HAP-1 (cell line): ENCODE measurements at regions of chr13 and their contacts with region 1.

Region 1: DNA sequence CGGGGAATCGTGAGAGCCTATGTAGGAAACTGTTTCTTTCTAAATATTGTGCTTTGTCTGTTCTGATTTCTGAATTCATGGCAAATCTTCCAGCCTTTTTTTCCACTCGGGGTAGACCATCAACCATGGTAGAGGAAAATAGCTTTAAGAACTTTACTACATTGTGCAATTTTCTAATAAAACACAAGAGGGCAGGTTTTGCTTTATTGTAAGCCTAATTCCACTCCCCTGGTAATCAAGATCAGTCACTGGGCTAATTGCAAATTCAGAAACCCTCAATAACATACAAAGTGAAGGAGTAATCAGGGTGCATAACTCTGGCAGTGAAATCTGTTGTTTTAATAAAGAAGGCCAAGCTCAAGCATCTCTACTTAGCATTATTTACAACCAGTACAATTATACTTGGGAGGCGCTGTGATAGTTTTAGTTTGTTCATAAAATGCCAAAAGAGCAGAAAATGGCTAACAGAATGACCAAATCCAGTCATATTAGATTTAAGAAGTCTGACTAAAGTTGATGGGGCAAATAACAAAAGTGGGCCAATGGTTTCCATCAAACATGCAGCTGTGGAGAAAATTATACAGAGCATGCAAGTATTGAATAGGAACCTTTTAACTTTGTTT is 43.8 kb downstream of the DCT start:
- DNase-seq: peak in 1 of 2 experiments; percentile 47
- H3K4me3 ChIP-seq: no peak overlapping the region
- H3K4me1 ChIP-seq: peaks cover 14% of the 10 kb centered on the region
- H3K27me3 ChIP-seq: peaks cover 10% of the 10 kb centered on the region; the same call in 1 of the 2 replicates

Region 2: GRCh38 chr13:93466502-93467036 is 969.1 kb before region 1 on chr13:
- in situ Hi-C with region 1: no loop called
- DNase-seq: no peak
- H3K4me3 ChIP-seq: no peak overlapping the region
- H3K4me1 ChIP-seq: 0 out of 2 replicates have a peak, but pooled peaks cover 2% of the 10 kb centered on the region
- H3K27me3 ChIP-seq: no peaks in the 10 kb centered on the region

Region 3: GRCh38 chr13:94612050-94612449 is 176.3 kb after region 1 on chr13:
- in situ Hi-C with region 1: loop called (anchors 5 kb)
- DNase-seq: no peak
- H3K4me3 ChIP-seq: no peak overlapping the region
- H3K4me1 ChIP-seq: peaks cover 12% of the 10 kb centered on the region
- H3K27me3 ChIP-seq: no peaks in the 10 kb centered on the region

Region 4: GRCh38 chr13:94722609-94723345 is 287.1 kb after region 1 on chr13:
- in situ Hi-C with region 1: no loop called
- DNase-seq: peak; percentile 69 to 83
- H3K4me3 ChIP-seq: no peak overlapping the region
- H3K4me1 ChIP-seq: peaks cover 15% of the 10 kb centered on the region
- H3K27me3 ChIP-seq: no peaks in the 10 kb centered on the region

Region 5: GRCh38 chr13:95156208-95156607 is 720.5 kb after region 1 on chr13:
- in situ Hi-C with region 1: loop called (anchors 25 kb)
- DNase-seq: no peak
- H3K4me3 ChIP-seq: no peak overlapping the region
- H3K4me1 ChIP-seq: peaks cover 23% of the 10 kb centered on the region
- H3K27me3 ChIP-seq: peaks cover 15% of the 10 kb centered on the region; the same call in 1 of the 2 replicates